Tibial artery (tissue), 4 donors: ENCODE measurements at regions of chr4 and their contacts with region 1.

Region 1: GRCh38 chr4:89434364-89434988 is 126.9 kb upstream of the GPRIN3 start:
- DNase-seq: no peak
- H3K4me3 ChIP-seq: no peak overlapping the region
- H3K27ac ChIP-seq: no peak overlapping the region
- H3K4me1 ChIP-seq: no peaks in the 10 kb centered on the region
- H3K27me3 ChIP-seq: no peaks in the 10 kb centered on the region
- CTCF ChIP-seq: peak; percentile 42 to 48

Region 2: DNA sequence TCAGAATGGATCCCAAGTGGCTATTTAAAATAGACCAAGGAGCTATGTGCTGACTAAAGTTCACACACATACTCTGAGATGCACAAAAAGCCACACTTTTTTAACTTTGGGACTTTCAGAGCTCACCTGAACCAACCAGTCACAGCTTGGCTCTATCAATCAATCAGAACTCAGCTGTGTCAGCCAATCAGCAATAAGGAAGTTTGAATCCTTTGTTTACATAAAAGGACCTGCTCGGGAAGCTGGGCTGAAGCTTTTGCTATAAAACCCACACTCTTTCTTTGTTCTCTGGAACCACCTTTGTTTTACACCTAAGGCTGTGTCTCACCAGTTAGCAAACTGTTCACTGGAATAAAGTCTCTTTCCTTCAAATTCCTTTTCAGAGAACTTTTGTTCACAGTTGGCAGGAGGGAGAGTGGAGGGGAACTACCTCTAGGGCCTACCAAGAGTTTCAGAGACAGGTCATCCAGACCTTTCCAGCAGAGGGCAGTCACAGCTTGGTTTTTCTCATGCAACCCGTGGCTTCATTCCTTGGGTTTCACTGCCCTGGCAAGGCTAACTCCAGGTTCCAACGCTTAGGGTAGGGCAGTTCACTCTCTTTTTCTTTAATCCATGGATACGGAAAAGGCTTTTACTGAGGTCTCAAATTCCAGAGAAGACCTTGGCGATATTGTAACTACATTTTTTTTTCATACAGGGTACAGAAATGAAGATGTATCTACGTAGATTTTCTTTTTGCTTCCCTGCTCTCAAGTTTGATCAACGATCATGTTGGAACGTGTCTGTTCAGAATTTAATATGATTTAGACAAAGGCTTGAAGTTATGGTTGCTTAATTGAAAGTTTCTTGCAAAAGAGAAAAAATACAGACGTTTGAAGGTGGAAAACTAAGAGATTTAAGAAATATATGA is 207.6 kb before region 1 on chr4:
- intact Hi-C with region 1: loop called (anchors 10 kb)
- DNase-seq: peak; percentile 63 to 76
- H3K4me3 ChIP-seq: no peak overlapping the region
- H3K27ac ChIP-seq: no peak overlapping the region
- H3K4me1 ChIP-seq: no peaks in the 10 kb centered on the region
- H3K27me3 ChIP-seq: no peaks in the 10 kb centered on the region
- CTCF ChIP-seq: peak; percentile 50 to 59